HepG2 (cell line): ENCODE measurements at regions of chr2 and their contacts with region 1.

Region 1: GRCh38 chr2:177604271-177605065 is 211.9 kb downstream of the AGPS start:
- DNase-seq: peak; percentile 76
- ATAC-seq: peak; percentile 70
- H3K4me3 ChIP-seq: peak overlapping the region in 1 of 3 experiments; percentile 5; a peak in 2 of 6 replicates
- H3K27ac ChIP-seq: peak overlapping the region; percentile 5
- H3K4me1 ChIP-seq: peaks cover 65% of the 10 kb centered on the region
- H3K27me3 ChIP-seq: no peaks in the 10 kb centered on the region; a peak in 1 of 5 replicates
- CTCF ChIP-seq: peak; percentile 88
- EP300 ChIP-seq: no peak
- POLR2A ChIP-seq: no peak
- RAD21 ChIP-seq: peak; percentile 78; the same call in 1 of the 2 replicates

Region 2: DNA sequence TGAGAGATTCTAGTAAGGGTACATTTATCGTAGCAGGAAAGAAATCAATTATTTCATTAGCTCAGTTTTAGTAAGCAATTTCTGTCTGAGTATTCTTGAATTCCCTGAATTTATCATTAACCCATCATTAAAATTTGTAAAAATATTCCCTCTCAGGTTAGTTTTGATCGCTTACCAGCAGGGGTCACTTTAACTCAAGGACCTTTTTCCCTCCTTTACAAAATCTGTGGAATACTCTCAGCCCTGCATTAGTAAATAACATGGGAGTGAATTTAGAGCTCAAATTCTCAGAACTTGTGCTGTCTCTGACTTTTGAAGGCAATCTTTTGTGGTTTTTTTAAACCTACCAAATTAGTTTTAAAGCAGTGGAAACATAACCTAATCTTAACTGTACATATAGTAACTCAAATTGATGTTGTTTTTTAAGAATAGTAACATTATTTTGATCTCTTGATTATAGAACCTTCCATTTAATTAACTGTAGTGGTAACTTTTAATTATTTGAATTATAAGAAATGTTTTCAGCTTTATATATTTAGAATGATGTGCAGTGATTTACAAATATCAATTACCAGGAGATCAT is 114.7 kb before region 1 on chr2:
- CTCF ChIA-PET with region 1: interaction called, 19 read pairs
- POLR2A ChIA-PET with region 1: interaction called, 4 read pairs
- in situ Hi-C with region 1: loop called (anchors 10 kb)
- intact Hi-C with region 1: loop called (anchors 1 kb)
- DNase-seq: peak; percentile 41
- ATAC-seq: peak; percentile 57
- H3K4me3 ChIP-seq: no peak overlapping the region
- H3K27ac ChIP-seq: no peak overlapping the region
- H3K4me1 ChIP-seq: no peaks in the 10 kb centered on the region
- H3K27me3 ChIP-seq: no peaks in the 10 kb centered on the region
- CTCF ChIP-seq: peak; percentile 62
- EP300 ChIP-seq: no peak
- POLR2A ChIP-seq: no peak
- RAD21 ChIP-seq: no peak

Region 3: DNA sequence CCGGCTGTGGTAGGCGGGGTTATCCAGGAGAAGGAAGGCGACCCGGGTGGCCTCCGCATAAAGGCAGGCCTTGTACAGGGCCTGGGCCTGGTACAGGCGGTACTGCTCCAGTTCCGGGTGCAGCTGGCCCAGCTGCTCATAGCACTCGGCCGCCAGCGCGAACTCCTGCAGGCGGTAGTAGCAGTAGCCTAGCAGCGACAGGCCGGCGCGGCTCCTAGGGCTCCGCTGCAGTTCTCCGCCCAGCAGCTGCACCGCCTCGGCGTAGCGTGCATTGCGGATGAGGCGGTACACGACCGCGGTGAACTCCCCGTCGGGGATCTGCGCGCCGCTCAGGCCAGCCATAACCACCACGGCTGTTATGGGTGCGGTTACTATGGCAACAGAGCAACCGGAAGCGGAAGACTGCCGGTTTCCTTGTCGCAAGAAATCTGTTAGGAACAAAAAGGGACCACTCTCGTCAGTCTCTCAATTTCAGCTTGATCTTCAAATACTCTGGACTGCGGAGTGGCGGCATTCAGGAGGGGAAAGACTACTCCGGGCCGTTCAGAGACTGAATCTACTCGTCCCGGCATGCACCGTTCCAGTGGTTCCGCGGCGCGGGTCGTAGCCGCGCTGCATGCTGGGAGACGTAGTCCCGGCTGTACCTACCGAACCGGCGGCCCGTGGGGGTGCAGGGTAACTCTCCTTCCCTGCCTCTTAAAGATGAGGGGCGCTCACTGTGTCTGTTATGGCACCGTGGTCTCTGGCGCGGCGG is 51.9 kb before region 1 on chr2:
- CTCF ChIA-PET with region 1: interaction called, 3 read pairs
- POLR2A ChIA-PET with region 1: interaction called, 5 read pairs
- in situ Hi-C with region 1: no loop called
- intact Hi-C with region 1: loop called (anchors 1 kb)
- DNase-seq: peak; percentile 89
- ATAC-seq: peak; percentile 93
- H3K4me3 ChIP-seq: peak overlapping the region; percentile 76 to 92 (median 82)
- H3K27ac ChIP-seq: peak overlapping the region; percentile 93
- H3K4me1 ChIP-seq: peaks cover 15% of the 10 kb centered on the region
- H3K27me3 ChIP-seq: no peaks in the 10 kb centered on the region; a peak in 1 of 5 replicates
- CTCF ChIP-seq: peak; percentile 36
- EP300 ChIP-seq: no peak
- POLR2A ChIP-seq: peak; percentile 33 to 50; a peak in 2 of 4 replicates
- RAD21 ChIP-seq: peak; percentile 40; the same call in 1 of the 2 replicates

Region 4: GRCh38 chr2:177592945-177593344 is 11.5 kb before region 1 on chr2:
- CTCF ChIA-PET with region 1: no interaction called
- POLR2A ChIA-PET with region 1: interaction called, 12 read pairs
- in situ Hi-C with region 1: no loop called
- intact Hi-C with region 1: no loop called
- DNase-seq: no peak
- ATAC-seq: peak; percentile 39
- H3K4me3 ChIP-seq: no peak overlapping the region
- H3K27ac ChIP-seq: no peak overlapping the region
- H3K4me1 ChIP-seq: peaks cover 48% of the 10 kb centered on the region
- H3K27me3 ChIP-seq: no peaks in the 10 kb centered on the region
- CTCF ChIP-seq: no peak
- EP300 ChIP-seq: no peak
- POLR2A ChIP-seq: no peak
- RAD21 ChIP-seq: no peak

Region 5: GRCh38 chr2:177724398-177725287 is 120.2 kb after region 1 on chr2:
- CTCF ChIA-PET with region 1: no interaction called
- POLR2A ChIA-PET with region 1: no interaction called
- in situ Hi-C with region 1: no loop called
- intact Hi-C with region 1: loop called (anchors 1 kb)
- DNase-seq: peak; percentile 47
- ATAC-seq: peak; percentile 94
- H3K4me3 ChIP-seq: no peak overlapping the region
- H3K27ac ChIP-seq: no peak overlapping the region
- H3K4me1 ChIP-seq: peaks cover 11% of the 10 kb centered on the region
- H3K27me3 ChIP-seq: no peaks in the 10 kb centered on the region
- CTCF ChIP-seq: peak; percentile 94
- EP300 ChIP-seq: no peak
- POLR2A ChIP-seq: no peak
- RAD21 ChIP-seq: peak; percentile 82

Region 6: GRCh38 chr2:178426388-178426787 is 821.9 kb after region 1 on chr2:
- CTCF ChIA-PET with region 1: no interaction called
- POLR2A ChIA-PET with region 1: no interaction called
- in situ Hi-C with region 1: no loop called
- intact Hi-C with region 1: no loop called
- DNase-seq: no peak
- ATAC-seq: no peak
- H3K4me3 ChIP-seq: no peak overlapping the region
- H3K27ac ChIP-seq: no peak overlapping the region
- H3K4me1 ChIP-seq: peaks cover 25% of the 10 kb centered on the region
- H3K27me3 ChIP-seq: no peaks in the 10 kb centered on the region
- CTCF ChIP-seq: no peak
- EP300 ChIP-seq: no peak
- POLR2A ChIP-seq: no peak
- RAD21 ChIP-seq: no peak